ENCODE measurements at regions of chr6 and their contacts with region 1.

Region 1: DNA sequence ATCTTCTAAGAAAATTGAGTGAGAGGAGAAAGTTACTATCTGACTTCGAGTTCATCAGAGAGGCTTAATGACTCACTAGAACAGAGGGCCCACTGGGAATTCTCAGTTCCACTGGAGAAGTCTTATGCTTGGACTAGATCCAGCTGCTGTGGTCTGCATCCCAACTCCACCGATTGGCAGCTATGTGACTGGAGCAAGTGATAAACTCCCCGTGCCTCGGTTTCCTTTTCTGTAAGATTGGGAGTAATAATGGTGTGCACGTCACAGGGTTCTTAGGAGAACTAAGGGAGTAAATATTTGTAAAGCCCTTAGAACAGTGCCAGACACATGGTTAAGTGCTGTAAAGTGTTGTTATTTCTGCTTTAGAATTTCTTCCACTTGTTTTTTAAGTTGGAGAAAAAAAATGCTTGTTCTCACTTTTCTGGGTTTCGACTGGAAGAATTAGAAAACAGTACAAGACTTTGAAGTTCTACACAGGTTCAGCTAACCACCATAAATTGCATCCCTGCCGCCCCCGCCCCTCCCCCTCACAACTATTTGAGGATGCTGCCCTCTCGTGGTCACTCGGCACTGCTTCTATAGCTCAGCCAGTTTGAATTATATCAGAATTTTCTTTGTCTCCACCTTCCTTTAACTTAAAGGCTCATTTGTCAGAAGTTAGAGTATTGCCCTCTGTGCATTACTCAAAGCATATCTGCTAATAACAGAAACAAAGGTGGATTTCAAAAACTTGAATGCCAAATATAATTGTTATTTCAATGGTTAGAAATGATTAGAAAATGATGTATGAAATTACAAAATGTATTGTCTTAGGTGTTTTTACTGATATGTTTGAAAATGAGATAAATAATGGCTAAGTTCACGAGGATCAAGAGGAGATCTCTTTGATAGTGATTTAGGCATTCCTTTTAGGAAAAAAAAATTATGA is 95.0 kb upstream of the IFNGR1 start:
- DNase-seq: peak; percentile 76 to 91 (median 82)
- ATAC-seq: peak; percentile 88 to 95
- H3K4me3 ChIP-seq: peak overlapping the region; percentile 52
- H3K27ac ChIP-seq: no peak overlapping the region
- H3K4me1 ChIP-seq: peaks cover 5% of the 10 kb centered on the region
- H3K27me3 ChIP-seq: no peaks in the 10 kb centered on the region

Region 2: DNA sequence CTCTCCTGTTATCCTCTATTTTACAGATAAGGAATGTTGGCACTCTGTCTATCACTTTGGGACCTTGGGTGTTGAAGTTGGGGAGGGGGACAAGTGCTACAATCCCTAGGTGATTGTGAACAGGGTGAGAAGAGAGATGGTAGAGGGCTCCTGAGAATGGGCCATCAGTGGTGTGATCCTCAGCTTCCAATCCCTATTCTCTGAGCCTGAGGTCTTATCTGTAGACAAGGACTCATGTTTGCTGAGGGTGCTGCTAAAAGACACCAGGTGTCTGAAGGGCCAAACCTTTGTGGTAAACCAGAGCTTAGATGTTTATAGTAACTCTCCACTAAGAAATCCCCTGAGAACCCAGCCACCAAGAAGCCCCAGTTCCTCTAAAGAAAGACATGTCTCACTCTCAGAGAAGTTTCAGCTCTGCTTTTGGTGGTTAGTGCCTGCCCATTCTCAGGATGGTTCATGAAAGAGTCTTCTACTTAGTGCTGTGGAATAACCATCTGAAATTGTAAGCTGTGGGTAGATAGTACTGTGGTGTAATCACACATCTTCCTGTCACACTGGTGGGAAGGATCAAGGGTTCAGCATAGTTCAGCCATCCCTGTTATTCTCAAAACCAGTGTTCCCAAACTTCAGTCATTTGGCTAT is 211.2 kb before region 1 on chr6:
- intact Hi-C with region 1: loop called in 1 of 4 experiments (anchors 10 kb)
- DNase-seq: no peak
- ATAC-seq: no peak
- H3K4me3 ChIP-seq: no peak overlapping the region
- H3K27ac ChIP-seq: no peak overlapping the region
- H3K4me1 ChIP-seq: no peaks in the 10 kb centered on the region
- H3K27me3 ChIP-seq: no peaks in the 10 kb centered on the region

Measured in right cardiac atrium (tissue), 5 donors.